HepG2 (cell line): ENCODE measurements at regions of chr13 and their contacts with region 1.

Region 1: DNA sequence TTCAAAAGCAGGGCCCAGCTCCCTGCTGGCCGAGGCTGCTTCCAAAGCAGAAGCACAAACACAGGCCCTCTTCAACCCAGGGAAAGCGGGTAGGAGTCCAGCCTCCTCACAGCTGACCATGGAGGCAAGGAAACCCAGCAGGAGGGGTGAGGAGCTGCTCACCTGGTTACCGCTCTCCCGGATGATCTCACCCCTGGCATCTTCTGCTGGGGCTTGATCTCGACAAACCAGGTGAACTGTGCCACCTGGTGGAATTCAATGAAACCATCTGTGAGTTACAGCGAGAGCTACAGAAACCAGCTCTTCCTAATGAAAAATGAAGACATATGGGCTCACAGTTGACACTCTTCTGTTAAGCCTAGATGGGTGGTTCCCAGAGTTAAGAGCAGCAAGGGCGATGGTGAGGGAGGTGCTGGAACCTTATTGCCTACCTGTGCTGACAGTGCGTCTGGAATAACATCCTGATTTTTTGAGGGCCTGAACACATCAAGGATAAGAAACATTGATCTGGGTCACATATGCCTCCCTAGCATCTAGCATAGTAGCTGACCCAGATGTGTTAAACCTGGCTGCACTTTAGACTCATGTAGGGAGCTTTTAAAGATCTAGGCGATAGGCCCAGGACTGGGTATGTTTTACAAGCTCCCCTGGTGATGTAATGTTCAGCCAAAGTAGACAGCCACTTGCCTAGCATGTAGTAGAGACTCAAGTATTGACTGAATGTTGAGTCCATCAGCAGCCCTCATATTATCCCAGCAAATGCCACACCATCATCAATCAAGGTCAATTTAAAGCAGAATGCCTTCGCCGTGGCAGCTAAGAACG is 6.1 kb downstream of the DHRS12 start:
- DNase-seq: peak; percentile 66
- ATAC-seq: peak; percentile 84
- H3K4me3 ChIP-seq: no peak overlapping the region
- H3K27ac ChIP-seq: no peak overlapping the region
- H3K4me1 ChIP-seq: peaks cover 33% of the 10 kb centered on the region
- H3K27me3 ChIP-seq: no peaks in the 10 kb centered on the region
- CTCF ChIP-seq: peak; percentile 84
- EP300 ChIP-seq: no peak
- POLR2A ChIP-seq: no peak
- RAD21 ChIP-seq: peak; percentile 82

Region 2: GRCh38 chr13:51125498-51126226 is 672.2 kb before region 1 on chr13:
- CTCF ChIA-PET with region 1: interaction called, 4 read pairs
- POLR2A ChIA-PET with region 1: no interaction called
- in situ Hi-C with region 1: loop called (anchors 10 kb)
- intact Hi-C with region 1: loop called (anchors 5 kb)
- DNase-seq: peak; percentile 63
- ATAC-seq: peak; percentile 86
- H3K4me3 ChIP-seq: no peak overlapping the region
- H3K27ac ChIP-seq: no peak overlapping the region
- H3K4me1 ChIP-seq: peaks cover 29% of the 10 kb centered on the region
- H3K27me3 ChIP-seq: peaks cover 0 to 34% of the 10 kb centered on the region in 2 experiments; a peak in 4 of 5 replicates
- CTCF ChIP-seq: peak; percentile 86
- EP300 ChIP-seq: no peak
- POLR2A ChIP-seq: no peak
- RAD21 ChIP-seq: peak; percentile 55; the same call in 1 of the 2 replicates

Region 3: DNA sequence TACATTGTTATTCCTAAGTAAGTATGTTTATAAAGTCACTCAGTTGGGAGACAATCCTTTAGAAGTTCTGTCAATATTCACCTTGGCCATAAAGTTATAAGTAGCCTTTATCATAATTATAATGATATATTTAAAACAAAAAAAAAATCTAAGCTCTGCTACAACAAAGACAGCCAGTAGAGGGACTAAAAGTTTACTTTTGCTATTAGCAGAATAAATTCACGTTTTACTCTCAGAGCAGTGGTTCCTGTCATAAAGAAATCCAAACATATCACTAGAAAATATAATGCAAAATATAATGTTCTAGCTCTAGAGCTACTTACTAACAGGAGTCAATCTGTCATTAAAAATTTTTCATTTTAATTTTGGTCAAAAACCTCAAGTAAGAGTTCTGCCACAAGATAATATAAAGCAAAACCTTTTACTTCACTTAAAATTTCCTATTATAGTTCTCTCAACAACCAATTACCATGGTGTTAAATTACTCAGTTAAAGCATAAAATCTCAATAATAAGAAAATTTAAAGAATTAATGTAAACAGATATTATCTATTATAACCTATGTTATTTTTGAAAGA is 362.8 kb before region 1 on chr13:
- CTCF ChIA-PET with region 1: interaction called, 9 read pairs
- POLR2A ChIA-PET with region 1: interaction called, 3 read pairs
- in situ Hi-C with region 1: loop called (anchors 10 kb)
- intact Hi-C with region 1: loop called (anchors 5 kb)
- DNase-seq: no peak
- ATAC-seq: no peak
- H3K4me3 ChIP-seq: no peak overlapping the region
- H3K27ac ChIP-seq: no peak overlapping the region
- H3K4me1 ChIP-seq: peaks cover 5% of the 10 kb centered on the region
- H3K27me3 ChIP-seq: no peaks in the 10 kb centered on the region
- CTCF ChIP-seq: peak; percentile 18; the same call in 1 of the 2 replicates
- EP300 ChIP-seq: no peak
- POLR2A ChIP-seq: no peak
- RAD21 ChIP-seq: no peak

Region 4: GRCh38 chr13:51444922-51445321 is 353.0 kb before region 1 on chr13:
- CTCF ChIA-PET with region 1: no interaction called
- POLR2A ChIA-PET with region 1: no interaction called
- in situ Hi-C with region 1: loop called (anchors 10 kb)
- intact Hi-C with region 1: no loop called
- DNase-seq: no peak
- ATAC-seq: no peak
- H3K4me3 ChIP-seq: no peak overlapping the region
- H3K27ac ChIP-seq: no peak overlapping the region
- H3K4me1 ChIP-seq: peaks cover 12% of the 10 kb centered on the region
- H3K27me3 ChIP-seq: no peaks in the 10 kb centered on the region
- CTCF ChIP-seq: peak; percentile 38
- EP300 ChIP-seq: no peak
- POLR2A ChIP-seq: no peak
- RAD21 ChIP-seq: no peak

Region 5: GRCh38 chr13:51729866-51730546 is 67.9 kb before region 1 on chr13:
- CTCF ChIA-PET with region 1: no interaction called
- POLR2A ChIA-PET with region 1: no interaction called
- in situ Hi-C with region 1: no loop called
- intact Hi-C with region 1: no loop called
- DNase-seq: peak; percentile 70
- ATAC-seq: peak; percentile 70
- H3K4me3 ChIP-seq: no peak overlapping the region
- H3K27ac ChIP-seq: peak overlapping the region; percentile 35
- H3K4me1 ChIP-seq: peaks cover 37% of the 10 kb centered on the region
- H3K27me3 ChIP-seq: no peaks in the 10 kb centered on the region
- CTCF ChIP-seq: no peak
- EP300 ChIP-seq: no peak
- POLR2A ChIP-seq: no peak
- RAD21 ChIP-seq: no peak